ENCODE measurements at regions of chr17 and their contacts with region 1.

Region 1: GRCh38 chr17:29293890-29294579 is at the start of gene NUFIP2:
- DNase-seq: peak; percentile 99
- H3K4me3 ChIP-seq: peak within 1 kb of the TSS; percentile 80
- H3K27ac ChIP-seq: peak within 1 kb of the TSS; percentile 95
- H3K4me1 ChIP-seq: peaks cover 53% of the 10 kb centered on the region
- H3K27me3 ChIP-seq: no peaks in the 10 kb centered on the region
- CTCF ChIP-seq: no peak
- total RNA-seq, gene NUFIP2: 40.5 TPM

Region 2: GRCh38 chr17:29148790-29149430 is 145.1 kb before region 1 on chr17:
- intact Hi-C with region 1: loop called (anchors 10 kb)
- DNase-seq: peak; percentile 95
- H3K4me3 ChIP-seq: peak overlapping the region; percentile 70
- H3K27ac ChIP-seq: peak overlapping the region; percentile 81
- H3K4me1 ChIP-seq: peaks cover 64% of the 10 kb centered on the region
- H3K27me3 ChIP-seq: no peaks in the 10 kb centered on the region
- CTCF ChIP-seq: peak; percentile 99

Region 3: GRCh38 chr17:29263916-29264315 is 30.1 kb before region 1 on chr17:
- intact Hi-C with region 1: no loop called
- DNase-seq: no peak
- H3K4me3 ChIP-seq: no peak overlapping the region
- H3K27ac ChIP-seq: no peak overlapping the region
- H3K4me1 ChIP-seq: peaks cover 16% of the 10 kb centered on the region
- H3K27me3 ChIP-seq: no peaks in the 10 kb centered on the region
- CTCF ChIP-seq: no peak